Endothelial cell of umbilical vein (primary cell): ENCODE measurements at regions of chr22 and their contacts with region 1.

Region 1: DNA sequence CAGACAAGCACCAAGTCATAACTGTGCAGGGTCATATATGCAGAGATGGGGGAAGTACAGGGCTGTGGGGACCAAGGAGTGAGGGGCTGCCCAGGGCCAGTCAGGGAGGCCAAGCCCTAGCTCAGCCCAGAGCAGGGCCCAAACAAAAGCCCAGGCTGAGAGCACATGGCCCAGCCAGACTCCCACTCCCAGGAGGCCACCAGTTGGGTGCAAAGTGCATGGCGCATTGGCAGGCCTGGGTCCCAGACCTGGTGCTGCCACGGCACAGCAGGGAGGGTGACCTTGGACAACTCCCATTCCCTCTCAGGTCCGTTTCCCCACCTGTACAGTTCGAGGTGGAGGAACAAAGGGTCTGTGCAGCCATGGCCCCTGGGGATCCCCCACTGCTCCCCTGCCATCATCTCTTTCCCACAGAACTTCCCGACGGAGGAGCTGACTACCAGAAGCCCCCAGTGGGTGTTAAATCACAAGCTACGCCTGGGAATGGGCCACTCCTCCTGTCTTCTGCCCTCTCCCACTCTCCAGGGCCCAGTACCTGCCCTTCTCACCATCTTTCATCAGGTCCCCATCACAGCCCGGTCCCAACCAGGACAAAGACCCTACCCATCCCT is 608 bp downstream of the NIPSNAP1 start:
- DNase-seq: no peak
- H3K4me3 ChIP-seq: peak overlapping the region; percentile 65 to 90 (median 75)
- H3K27ac ChIP-seq: no peak overlapping the region
- H3K4me1 ChIP-seq: peaks cover 5% of the 10 kb centered on the region
- H3K27me3 ChIP-seq: no peaks in the 10 kb centered on the region
- CTCF ChIP-seq: no peak
- POLR2A ChIP-seq: no peak

Region 2: GRCh38 chr22:29541845-29542244 is 38.5 kb before region 1 on chr22:
- CTCF ChIA-PET with region 1: no interaction called
- POLR2A ChIA-PET with region 1: no interaction called
- dilution Hi-C with region 1: no loop called
- intact Hi-C with region 1: no loop called
- DNase-seq: no peak
- H3K4me3 ChIP-seq: no peak overlapping the region
- H3K27ac ChIP-seq: no peak overlapping the region
- H3K4me1 ChIP-seq: peaks cover 9% of the 10 kb centered on the region
- H3K27me3 ChIP-seq: no peaks in the 10 kb centered on the region
- CTCF ChIP-seq: no peak
- POLR2A ChIP-seq: no peak

Region 3: GRCh38 chr22:29553351-29554224 is 26.7 kb before region 1 on chr22 and contains the start of gene THOC5:
- CTCF ChIA-PET with region 1: interaction called, 5 read pairs
- POLR2A ChIA-PET with region 1: no interaction called
- dilution Hi-C with region 1: no loop called
- intact Hi-C with region 1: loop called (anchors 2 kb)
- DNase-seq: peak; percentile 97
- H3K4me3 ChIP-seq: peak within 1 kb of the TSS; percentile 43 to 91 (median 47)
- H3K27ac ChIP-seq: peak within 1 kb of the TSS; percentile 67
- H3K4me1 ChIP-seq: peaks cover 8% of the 10 kb centered on the region
- H3K27me3 ChIP-seq: no peaks in the 10 kb centered on the region
- CTCF ChIP-seq: peak; percentile 77 to 81
- POLR2A ChIP-seq: peak; percentile 84
- total RNA-seq, gene THOC5: 73.8 and 82.9 TPM in 2 replicates

Region 4: DNA sequence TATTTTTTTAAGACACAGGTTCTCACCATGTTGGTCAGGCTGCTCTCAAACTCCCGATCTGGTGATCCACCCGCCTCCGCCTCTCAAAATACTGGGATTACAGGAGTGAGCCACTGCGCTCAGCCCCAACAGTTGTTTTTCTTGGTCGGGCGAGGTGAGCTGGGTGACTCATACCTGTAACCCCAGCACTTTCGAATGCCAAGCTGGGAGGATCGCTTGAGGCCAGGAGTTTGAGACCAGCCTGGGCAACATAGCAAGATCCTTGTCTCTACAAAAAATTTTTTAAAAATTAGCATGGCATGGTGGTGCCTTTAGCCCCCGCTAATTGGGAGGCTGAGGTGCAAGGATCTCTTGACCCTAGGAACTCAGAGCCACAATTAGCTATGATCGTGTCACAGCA is 16.1 kb after region 1 on chr22:
- CTCF ChIA-PET with region 1: no interaction called
- POLR2A ChIA-PET with region 1: no interaction called
- dilution Hi-C with region 1: no loop called
- intact Hi-C with region 1: no loop called
- DNase-seq: no peak
- H3K4me3 ChIP-seq: no peak overlapping the region
- H3K27ac ChIP-seq: no peak overlapping the region
- H3K4me1 ChIP-seq: no peaks in the 10 kb centered on the region
- H3K27me3 ChIP-seq: no peaks in the 10 kb centered on the region
- CTCF ChIP-seq: no peak
- POLR2A ChIP-seq: no peak

Region 5: GRCh38 chr22:29617922-29618629 is 37.8 kb after region 1 on chr22:
- CTCF ChIA-PET with region 1: no interaction called
- POLR2A ChIA-PET with region 1: no interaction called
- dilution Hi-C with region 1: no loop called
- intact Hi-C with region 1: no loop called
- DNase-seq: no peak
- H3K4me3 ChIP-seq: no peak overlapping the region
- H3K27ac ChIP-seq: peak overlapping the region; percentile 4
- H3K4me1 ChIP-seq: peaks cover 38% of the 10 kb centered on the region
- H3K27me3 ChIP-seq: no peaks in the 10 kb centered on the region
- CTCF ChIP-seq: no peak
- POLR2A ChIP-seq: no peak